Stomach (tissue), 19 donors: ENCODE measurements at regions of chr12 and their contacts with region 1.

Region 1: DNA sequence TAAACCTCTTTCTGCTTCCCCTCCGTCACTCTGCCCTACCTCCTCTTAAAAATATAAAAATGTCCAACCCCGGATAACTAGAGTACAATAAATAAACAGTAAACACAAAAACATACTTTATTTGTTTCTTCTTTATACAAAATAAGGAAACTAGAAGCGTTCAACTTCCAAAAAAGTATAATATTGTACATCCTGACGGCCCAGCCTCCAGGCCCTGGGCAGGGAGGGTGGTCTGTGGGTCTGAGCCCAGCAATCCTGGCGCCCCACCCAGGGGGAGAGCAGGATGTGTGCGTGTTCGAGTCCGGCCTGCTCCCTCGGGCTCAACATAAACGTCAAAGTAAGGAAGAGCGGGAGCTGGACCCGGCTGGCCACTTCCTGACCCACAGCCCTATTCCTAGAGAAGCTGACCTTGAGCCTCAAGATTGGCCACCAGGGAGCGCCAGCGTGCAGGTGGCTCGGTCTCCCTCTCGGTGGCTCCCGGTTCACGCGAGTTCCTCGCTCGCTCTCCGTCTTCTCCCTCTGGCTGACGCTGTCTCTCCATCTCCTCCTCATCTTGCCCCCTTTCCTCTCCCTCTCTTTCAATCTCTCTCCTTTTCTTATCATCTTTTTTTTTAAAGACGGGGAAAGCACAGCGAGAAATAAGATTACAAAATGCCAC is 9.4 kb downstream of the LHX5 start:
- DNase-seq: peak; percentile 82 to 91
- H3K4me3 ChIP-seq: peak overlapping the region; percentile 28 to 48 (median 33)
- H3K27ac ChIP-seq: no peak overlapping the region
- H3K4me1 ChIP-seq: peaks cover 40 to 50% (median 45%) of the 10 kb centered on the region in 4 donors
- H3K27me3 ChIP-seq: peaks cover 14 to 99% (median 73%) of the 10 kb centered on the region in 3 donors
- CTCF ChIP-seq: peak in 5 of 7 experiments; percentile 23 to 69 (median 57)
- EP300 ChIP-seq: no peak
- POLR2A ChIP-seq: no peak

Region 2: DNA sequence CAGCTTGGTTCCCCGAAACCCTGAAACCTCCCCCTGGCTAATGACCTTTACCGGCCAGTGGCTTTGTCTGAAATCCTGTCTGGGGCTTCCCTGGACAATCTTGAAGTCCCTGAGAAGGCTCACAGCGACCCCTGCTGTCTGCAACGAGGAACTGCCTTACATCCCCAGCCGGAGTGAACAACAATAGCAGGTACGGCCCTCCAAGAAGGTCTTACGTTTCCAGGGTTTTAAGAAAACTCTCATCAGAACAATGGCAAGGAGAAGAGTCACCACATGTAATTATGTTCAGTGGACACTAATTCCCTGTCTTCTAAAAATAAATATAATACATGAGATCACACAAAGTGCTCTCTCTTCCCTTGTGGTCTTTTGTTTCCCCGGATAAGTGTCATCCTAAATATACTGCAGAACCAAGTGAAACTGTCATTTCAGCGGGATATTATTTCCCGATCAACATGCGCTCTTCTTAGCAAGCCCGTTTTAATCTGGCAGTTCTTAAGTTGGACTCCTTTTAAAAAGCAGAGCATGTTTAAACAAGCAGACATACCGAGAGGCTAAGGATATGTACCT is 450.6 kb after region 1 on chr12:
- intact Hi-C with region 1: loop called (anchors 10 kb)
- DNase-seq: peak; percentile 60 to 86
- H3K4me3 ChIP-seq: no peak overlapping the region
- H3K27ac ChIP-seq: no peak overlapping the region
- H3K4me1 ChIP-seq: no peaks in the 10 kb centered on the region
- H3K27me3 ChIP-seq: no peaks in the 10 kb centered on the region
- CTCF ChIP-seq: peak in 5 of 7 experiments; percentile 57 to 78 (median 66)
- EP300 ChIP-seq: no peak
- POLR2A ChIP-seq: no peak